AG04449 (cell line): ENCODE measurements at regions of chr4 and their contacts with region 1.

Region 1: DNA sequence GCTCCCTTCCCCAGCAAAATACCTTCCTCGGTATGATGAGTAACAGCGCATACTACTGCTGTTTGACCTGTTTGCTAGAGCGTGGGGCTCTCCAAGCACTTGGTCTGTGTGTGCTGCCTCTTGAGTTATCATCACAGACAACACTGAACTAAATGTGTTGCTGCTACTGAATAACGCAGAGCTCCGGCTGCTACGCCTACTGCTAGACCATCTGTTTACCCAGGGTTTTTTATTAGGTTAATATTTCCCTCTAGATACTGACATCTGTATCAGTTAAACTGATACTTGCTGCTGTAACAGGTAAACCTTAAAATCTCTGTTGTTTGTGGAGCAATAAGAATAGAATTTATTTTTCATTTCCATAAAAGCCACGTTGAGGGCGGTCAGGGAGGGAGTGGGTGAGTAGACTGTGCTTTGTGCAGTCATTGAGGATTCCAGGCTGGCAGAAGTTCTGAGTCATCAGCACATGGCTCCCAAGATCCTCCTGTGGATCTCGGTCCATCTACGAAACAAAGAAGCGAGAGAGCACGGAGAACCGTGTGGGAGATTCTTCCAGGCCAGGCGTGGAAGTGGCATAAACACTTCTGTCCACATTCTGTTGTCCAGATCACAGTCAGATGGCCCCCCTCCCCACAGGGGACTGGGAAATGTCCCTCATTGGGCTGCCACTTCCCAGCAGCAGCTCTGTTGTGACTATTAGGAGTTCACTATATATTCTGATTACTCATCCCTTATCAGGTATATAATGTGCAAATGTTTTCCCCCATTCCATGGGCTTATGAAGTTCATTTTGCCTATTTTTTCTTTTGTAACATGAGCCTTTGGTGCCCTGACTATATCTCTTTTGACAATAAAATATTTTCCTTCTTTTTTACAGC is 14.1 kb downstream of the GRK4 start:
- DNase-seq: no peak
- H3K4me3 ChIP-seq: no peak overlapping the region
- CTCF ChIP-seq: no peak

Region 2: GRCh38 chr4:2963175-2963965 is 14.1 kb before region 1 on chr4 and contains the starts of genes GRK4 and NOP14:
- CTCF ChIA-PET with region 1: interaction called, 100 read pairs
- POLR2A ChIA-PET with region 1: interaction called, 7 read pairs
- DNase-seq: peak; percentile 86
- H3K4me3 ChIP-seq: peak within 1 kb of the TSS; percentile 89
- CTCF ChIP-seq: peak; percentile 48

Region 3: DNA sequence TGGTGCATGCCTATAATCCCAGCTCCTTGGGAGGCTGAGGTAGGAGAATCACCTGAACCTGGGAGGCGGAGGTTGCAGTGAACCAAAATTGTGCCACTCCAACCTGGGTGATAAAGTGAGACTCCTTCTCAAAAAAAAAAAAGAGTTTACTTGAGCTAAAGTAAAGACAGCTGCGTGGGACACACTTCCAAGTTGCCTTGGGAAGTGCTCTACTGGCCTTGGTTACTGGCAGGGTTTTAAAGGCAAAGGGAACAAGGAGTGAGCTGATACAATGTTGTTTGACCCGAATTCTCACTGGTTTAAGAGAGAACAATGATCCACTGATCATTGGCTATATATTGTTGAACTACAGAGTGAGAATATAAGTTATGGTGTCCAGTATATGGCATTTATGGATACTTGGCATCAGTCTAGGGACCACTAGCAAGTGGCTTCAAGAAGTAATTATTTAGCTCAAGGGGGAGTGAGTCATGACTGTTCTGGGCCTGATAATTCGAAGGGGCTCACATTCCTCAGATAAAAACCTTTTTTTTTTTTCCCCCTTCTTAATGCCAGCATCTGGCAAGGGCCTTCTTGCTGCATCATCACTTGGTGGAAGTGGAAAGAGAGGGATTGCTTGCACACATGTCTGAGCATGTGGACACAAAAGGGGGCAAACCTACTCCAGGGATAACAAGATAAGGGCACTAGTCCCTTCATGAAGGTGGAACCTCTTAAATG is 18.3 kb after region 1 on chr4:
- CTCF ChIA-PET with region 1: interaction called, 27 read pairs
- POLR2A ChIA-PET with region 1: no interaction called
- DNase-seq: no peak
- H3K4me3 ChIP-seq: no peak overlapping the region
- CTCF ChIP-seq: no peak

Region 4: DNA sequence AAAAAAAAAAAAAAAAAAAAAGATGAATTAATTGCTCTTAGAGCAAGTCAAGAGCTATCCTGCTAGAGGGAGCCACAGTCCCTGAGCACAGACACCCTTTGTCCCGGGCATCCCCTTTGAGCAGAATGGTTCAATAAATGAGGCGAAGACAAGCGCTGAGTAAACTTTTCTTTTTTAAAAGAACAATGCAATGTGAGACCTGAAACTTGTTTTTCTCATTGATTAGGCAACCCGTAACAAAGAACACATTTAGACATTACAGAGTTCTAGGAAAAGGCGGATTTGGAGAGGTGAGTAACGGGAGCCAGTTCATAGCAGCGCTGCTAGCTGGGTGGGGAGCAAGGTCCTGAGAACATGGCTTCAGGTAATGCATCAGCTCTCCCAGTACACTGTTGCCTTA is 32.0 kb after region 1 on chr4:
- CTCF ChIA-PET with region 1: interaction called, 15 read pairs
- POLR2A ChIA-PET with region 1: no interaction called
- DNase-seq: no peak
- H3K4me3 ChIP-seq: no peak overlapping the region
- CTCF ChIP-seq: no peak

Region 5: GRCh38 chr4:3041192-3042142 is 64.0 kb after region 1 on chr4:
- CTCF ChIA-PET with region 1: interaction called, 30 read pairs
- POLR2A ChIA-PET with region 1: no interaction called
- DNase-seq: no peak
- H3K4me3 ChIP-seq: peak overlapping the region; percentile 39
- CTCF ChIP-seq: no peak